Right ventricle myocardium superior (tissue), 1 donor: ENCODE measurements at regions of chr3 and their contacts with region 1.

Region 1: GRCh38 chr3:105868742-105869530 is at the start of gene CBLB:
- DNase-seq: peak; percentile 96
- ATAC-seq: peak; percentile 93
- total RNA-seq, gene CBLB: 56.7 TPM

Region 2: DNA sequence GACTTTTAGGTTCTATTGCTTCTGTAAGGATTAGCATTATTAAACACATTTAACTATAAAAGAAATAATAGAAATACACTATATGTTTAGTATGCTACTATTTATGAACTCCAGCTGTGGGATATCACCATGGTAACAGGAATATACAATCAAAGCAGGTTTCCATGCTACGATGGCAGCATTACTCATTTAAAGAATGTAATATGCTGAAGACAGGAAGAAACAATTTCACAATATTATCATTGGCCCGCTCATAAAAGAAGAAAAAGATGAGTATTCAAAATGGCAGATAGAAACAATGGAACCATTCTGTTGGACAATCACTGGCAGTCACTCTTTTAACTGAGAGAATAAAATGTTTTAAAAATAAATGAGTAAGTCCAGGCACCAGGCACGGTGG is 153.6 kb before region 1 on chr3:
- intact Hi-C with region 1: loop called (anchors 10 kb)
- DNase-seq: no peak
- ATAC-seq: no peak

Region 3: DNA sequence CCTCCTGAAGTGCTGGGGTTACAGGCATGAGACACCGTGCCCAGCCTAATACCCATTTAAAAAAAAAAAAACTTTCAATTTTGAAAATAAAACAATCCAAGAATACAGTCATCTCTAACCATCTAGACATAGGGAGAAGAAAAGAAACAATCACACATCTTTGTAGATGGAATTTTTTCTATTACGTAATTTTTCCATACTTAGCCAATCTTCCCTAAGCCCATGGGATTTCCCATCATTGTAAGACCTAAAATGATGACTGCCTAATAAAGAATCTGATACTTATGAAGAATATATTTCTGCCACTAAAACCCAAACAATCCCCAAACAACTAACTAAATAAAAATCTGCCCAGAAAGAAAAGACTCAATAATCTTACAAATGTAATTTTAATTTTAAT is 88.8 kb before region 1 on chr3:
- intact Hi-C with region 1: loop called (anchors 10 kb)
- DNase-seq: no peak
- ATAC-seq: no peak